PC-3 (cell line): ENCODE measurements at regions of chr14 and their contacts with region 1.

Region 1: GRCh38 chr14:35404449-35405303 is at the start of gene NFKBIA:
- DNase-seq: peak; percentile 90
- ATAC-seq: peak; percentile 73
- H3K4me3 ChIP-seq: peak within 1 kb of the TSS; percentile 92
- H3K27ac ChIP-seq: peak within 1 kb of the TSS; percentile 91
- H3K4me1 ChIP-seq: peaks cover 34% of the 10 kb centered on the region
- H3K27me3 ChIP-seq: no peaks in the 10 kb centered on the region
- CTCF ChIP-seq: peak; percentile 55
- total RNA-seq, gene NFKBIA: 186 and 226 TPM in 2 replicates

Region 2: GRCh38 chr14:35140718-35141581 is 263.7 kb before region 1 on chr14:
- CTCF ChIA-PET with region 1: interaction called, 4 read pairs
- POLR2A ChIA-PET with region 1: interaction called, 4 read pairs
- intact Hi-C with region 1: loop called (anchors 1 kb)
- DNase-seq: peak; percentile 61
- ATAC-seq: peak; percentile 20; the same call in 1 of the 2 replicates
- H3K4me3 ChIP-seq: no peak overlapping the region
- H3K27ac ChIP-seq: no peak overlapping the region
- H3K4me1 ChIP-seq: no peaks in the 10 kb centered on the region
- H3K27me3 ChIP-seq: no peaks in the 10 kb centered on the region
- CTCF ChIP-seq: peak; percentile 73

Region 3: GRCh38 chr14:35229495-35230089 is 175.1 kb before region 1 on chr14:
- CTCF ChIA-PET with region 1: interaction called, 7 read pairs
- POLR2A ChIA-PET with region 1: interaction called, 4 read pairs
- intact Hi-C with region 1: loop called (anchors 1 kb)
- DNase-seq: peak; percentile 61
- ATAC-seq: peak; percentile 84
- H3K4me3 ChIP-seq: no peak overlapping the region
- H3K27ac ChIP-seq: no peak overlapping the region
- H3K4me1 ChIP-seq: no peaks in the 10 kb centered on the region
- H3K27me3 ChIP-seq: no peaks in the 10 kb centered on the region
- CTCF ChIP-seq: peak; percentile 75

Region 4: GRCh38 chr14:35331605-35332516 is 72.8 kb before region 1 on chr14:
- CTCF ChIA-PET with region 1: interaction called, 4 read pairs
- POLR2A ChIA-PET with region 1: interaction called, 25 read pairs
- intact Hi-C with region 1: loop called (anchors 2 kb)
- DNase-seq: peak; percentile 93
- ATAC-seq: peak; percentile 68
- H3K4me3 ChIP-seq: 0 out of 2 replicates have a peak overlapping the region, but pooled peaks have one; percentile 14
- H3K27ac ChIP-seq: peak overlapping the region; percentile 76
- H3K4me1 ChIP-seq: peaks cover 44% of the 10 kb centered on the region
- H3K27me3 ChIP-seq: no peaks in the 10 kb centered on the region
- CTCF ChIP-seq: no peak

Region 5: GRCh38 chr14:35416108-35416750 is 11.6 kb after region 1 on chr14:
- CTCF ChIA-PET with region 1: interaction called, 4 read pairs
- POLR2A ChIA-PET with region 1: interaction called, 22 read pairs
- intact Hi-C with region 1: no loop called
- DNase-seq: peak; percentile 55
- ATAC-seq: 0 out of 2 replicates have a peak, but pooled peaks have one; percentile 3
- H3K4me3 ChIP-seq: no peak overlapping the region
- H3K27ac ChIP-seq: no peak overlapping the region
- H3K4me1 ChIP-seq: peaks cover 25% of the 10 kb centered on the region
- H3K27me3 ChIP-seq: no peaks in the 10 kb centered on the region
- CTCF ChIP-seq: no peak

Region 6: GRCh38 chr14:35539969-35540368 is 135.3 kb after region 1 on chr14:
- CTCF ChIA-PET with region 1: no interaction called
- POLR2A ChIA-PET with region 1: no interaction called
- intact Hi-C with region 1: no loop called
- DNase-seq: no peak
- ATAC-seq: no peak
- H3K4me3 ChIP-seq: no peak overlapping the region
- H3K27ac ChIP-seq: no peak overlapping the region
- H3K4me1 ChIP-seq: 0 out of 2 replicates have a peak, but pooled peaks cover 7% of the 10 kb centered on the region
- H3K27me3 ChIP-seq: peaks cover 2% of the 10 kb centered on the region
- CTCF ChIP-seq: no peak